ENCODE measurements at regions of chr1 and their contacts with region 1.

Region 1: GRCh38 chr1:84772428-84772943 is 82.2 kb upstream of the SSX2IP start:
- DNase-seq: peak; percentile 73
- CTCF ChIP-seq: peak; percentile 89

Region 2: GRCh38 chr1:84936116-84936810 is 163.8 kb after region 1 on chr1:
- in situ Hi-C with region 1: loop called (anchors 10 kb)
- DNase-seq: peak; percentile 25
- CTCF ChIP-seq: peak; percentile 84